Body of pancreas (tissue), 4 donors: ENCODE measurements at regions of chr9 and their contacts with region 1.

Region 1: GRCh38 chr9:98034593-98035546 is 21.7 kb upstream of the NANS start:
- DNase-seq: peak; percentile 85 to 89 (median 88)
- ATAC-seq: peak; percentile 84
- H3K4me3 ChIP-seq: no peak overlapping the region
- H3K27ac ChIP-seq: no peak overlapping the region
- H3K4me1 ChIP-seq: peaks cover 6% of the 10 kb centered on the region
- H3K27me3 ChIP-seq: no peaks in the 10 kb centered on the region
- CTCF ChIP-seq: peak; percentile 69 to 80 (median 74)
- POLR2A ChIP-seq: no peak

Region 2: DNA sequence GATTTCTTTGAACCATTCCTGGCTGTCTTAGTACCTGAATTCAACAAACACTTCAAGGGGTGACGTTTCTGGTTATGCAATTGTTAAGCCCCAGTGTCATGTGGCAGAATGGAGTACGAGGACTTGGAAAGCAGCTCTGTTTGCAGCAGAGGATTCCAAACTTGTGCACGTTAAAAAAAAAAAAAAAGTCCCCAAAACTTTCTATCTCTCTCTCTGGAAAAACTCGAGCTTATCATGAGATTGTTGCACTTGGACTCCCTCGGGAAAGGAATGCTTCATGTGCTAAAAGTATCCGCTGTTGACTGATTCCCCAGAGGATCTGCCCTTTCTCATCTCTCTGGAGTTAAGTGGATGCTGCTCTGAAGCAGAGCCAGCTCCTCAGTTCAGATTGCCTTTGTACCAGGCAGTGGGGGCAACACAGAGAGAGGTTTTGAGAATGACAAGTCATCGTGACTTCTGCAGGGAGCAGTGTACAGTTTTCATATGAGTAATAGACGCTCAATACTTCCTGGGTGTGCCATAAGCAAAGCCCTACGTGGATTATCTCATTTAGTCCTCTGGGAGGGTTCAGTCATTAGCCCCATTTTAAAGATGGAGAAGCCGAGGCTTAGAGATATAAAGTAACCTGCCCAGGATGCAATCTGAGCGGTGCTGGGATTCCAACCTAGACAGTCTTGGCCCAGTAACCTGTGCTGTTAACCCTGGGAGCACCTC is 505.4 kb before region 1 on chr9:
- intact Hi-C with region 1: no loop called
- DNase-seq: no peak
- ATAC-seq: no peak
- H3K4me3 ChIP-seq: no peak overlapping the region
- H3K27ac ChIP-seq: no peak overlapping the region
- H3K4me1 ChIP-seq: no peaks in the 10 kb centered on the region
- H3K27me3 ChIP-seq: no peaks in the 10 kb centered on the region
- CTCF ChIP-seq: no peak
- POLR2A ChIP-seq: no peak

Region 3: DNA sequence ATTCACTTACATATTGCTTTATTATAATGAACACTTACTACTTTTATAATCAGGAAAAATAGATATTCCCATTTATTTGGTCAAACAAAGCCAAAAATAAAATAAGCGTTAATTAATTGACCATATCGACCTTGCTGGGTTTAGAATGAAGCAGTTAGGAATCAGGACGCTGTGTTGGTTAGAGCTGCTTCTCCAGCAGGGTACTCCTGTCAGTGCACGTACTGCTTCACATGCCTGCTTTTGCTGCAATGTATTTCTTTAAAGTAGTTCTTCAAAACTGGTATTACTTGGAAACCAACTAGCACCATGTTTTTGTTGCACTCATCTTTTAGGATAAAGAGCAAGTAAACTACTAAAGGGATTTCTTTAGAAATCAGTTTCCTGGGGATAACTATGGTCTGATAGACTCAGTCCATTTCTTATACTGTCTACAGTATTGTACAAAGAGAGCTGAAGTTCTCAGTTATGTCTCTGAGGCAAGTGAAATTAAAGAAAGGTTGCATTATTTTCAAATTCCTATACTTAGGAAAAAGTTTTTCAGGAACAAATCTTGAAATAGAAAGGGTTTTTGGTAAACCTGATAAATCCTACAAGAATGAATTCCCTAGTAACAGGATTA is 105.8 kb before region 1 on chr9:
- intact Hi-C with region 1: loop called (anchors 5 kb)
- DNase-seq: no peak
- ATAC-seq: no peak
- H3K4me3 ChIP-seq: no peak overlapping the region
- H3K27ac ChIP-seq: no peak overlapping the region
- H3K4me1 ChIP-seq: peaks cover 3% of the 10 kb centered on the region
- H3K27me3 ChIP-seq: peaks cover 0 to 4% of the 10 kb centered on the region in 2 donors
- CTCF ChIP-seq: no peak
- POLR2A ChIP-seq: no peak

Region 4: GRCh38 chr9:97982683-97983588 is 51.9 kb before region 1 on chr9 and contains the start of gene ANP32B:
- intact Hi-C with region 1: loop called (anchors 10 kb)
- DNase-seq: peak; percentile 89 to 91 (median 90)
- ATAC-seq: peak; percentile 87
- H3K4me3 ChIP-seq: peak within 1 kb of the TSS; percentile 75 to 99
- H3K27ac ChIP-seq: peak within 1 kb of the TSS; percentile 88 to 97 (median 96)
- H3K4me1 ChIP-seq: peaks cover 37% of the 10 kb centered on the region
- H3K27me3 ChIP-seq: no peaks in the 10 kb centered on the region
- CTCF ChIP-seq: peak; percentile 60 to 98 (median 91)
- POLR2A ChIP-seq: peak; percentile 30 to 53 (median 45)
- total RNA-seq, gene ANP32B: 38.4 to 65.9 TPM

Region 5: GRCh38 chr9:98215821-98216220 is 181.0 kb after region 1 on chr9:
- intact Hi-C with region 1: no loop called
- DNase-seq: no peak
- ATAC-seq: no peak
- H3K4me3 ChIP-seq: no peak overlapping the region
- H3K27ac ChIP-seq: no peak overlapping the region
- H3K4me1 ChIP-seq: no peaks in the 10 kb centered on the region
- H3K27me3 ChIP-seq: no peaks in the 10 kb centered on the region
- CTCF ChIP-seq: peak in 4 of 7 experiments; percentile 8 to 21 (median 14)
- POLR2A ChIP-seq: no peak